CD4-positive, alpha-beta memory T cell (primary cell): ENCODE measurements at regions of chr10 and their contacts with region 1.

Region 1: DNA sequence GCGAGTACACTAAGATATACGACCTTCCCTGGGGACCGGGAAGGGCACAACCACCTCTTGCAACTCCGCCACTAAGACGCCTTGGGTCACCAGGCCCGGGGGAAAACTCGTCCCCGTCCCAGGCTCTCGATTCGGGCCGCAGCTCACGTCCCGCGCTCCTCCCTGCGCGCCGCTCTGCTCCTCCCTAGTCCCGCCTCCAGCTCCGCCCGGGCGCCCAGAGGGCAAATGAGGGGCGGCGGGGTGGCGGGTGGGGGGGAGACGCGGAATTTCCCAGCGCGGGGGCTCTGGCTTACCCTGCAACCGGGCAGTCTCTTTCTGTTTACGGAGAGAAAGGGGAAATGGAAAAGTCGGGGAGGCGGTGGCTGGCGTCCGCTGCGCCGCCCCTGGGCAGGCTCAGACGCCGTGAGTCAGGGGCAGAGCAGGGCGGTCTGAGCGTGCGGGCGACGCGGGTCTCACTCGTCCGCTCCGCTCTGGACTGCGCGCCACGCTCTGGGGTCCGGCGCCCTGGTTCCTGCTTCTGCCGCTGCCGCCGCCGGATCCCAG is at the start of gene MAP3K8:
- DNase-seq: peak; percentile 75 to 89 (median 79)
- H3K4me3 ChIP-seq: peak within 1 kb of the TSS; percentile 55 to 75
- H3K4me3 Mint-ChIP-seq: peak within 1 kb of the TSS; percentile 83 to 94 (median 92)
- H3K27ac ChIP-seq: peak within 1 kb of the TSS; percentile 88
- H3K27ac Mint-ChIP-seq: peak within 1 kb of the TSS; percentile 70 to 94 (median 91)
- H3K4me1 ChIP-seq: peaks cover 51% of the 10 kb centered on the region
- H3K4me1 Mint-ChIP-seq: peaks cover 37 to 55% (median 45%) of the 10 kb centered on the region in 4 donors
- H3K27me3 ChIP-seq: no peaks in the 10 kb centered on the region
- H3K27me3 Mint-ChIP-seq: no peaks in the 10 kb centered on the region
- total RNA-seq, gene MAP3K8: 5.5 to 6.5 TPM

Region 2: DNA sequence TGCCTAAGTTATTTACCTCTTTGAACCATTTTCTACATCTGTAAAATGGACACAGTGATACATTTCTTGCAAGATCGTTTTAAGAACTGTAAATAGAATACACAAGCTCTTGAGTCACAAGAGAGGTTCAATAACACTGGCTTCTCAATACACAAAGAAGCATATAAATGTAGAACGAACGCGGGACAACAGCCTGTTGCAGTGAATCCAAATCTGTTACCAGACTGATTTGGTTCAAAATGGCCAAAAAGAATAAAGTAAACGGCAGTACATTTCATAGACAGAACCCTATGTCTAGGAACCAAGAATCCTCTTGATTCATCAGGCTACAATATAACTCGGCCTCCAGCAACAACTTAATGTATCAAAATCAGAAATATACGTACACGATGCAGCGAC is 85.4 kb before region 1 on chr10:
- CTCF ChIA-PET with region 1: no interaction called
- POLR2A ChIA-PET with region 1: interaction called, 3 read pairs
- intact Hi-C with region 1: loop called (anchors 2 kb)
- DNase-seq: no peak
- H3K4me3 ChIP-seq: peak overlapping the region; percentile 82 to 96
- H3K4me3 Mint-ChIP-seq: peak overlapping the region; percentile 92 to 98 (median 94)
- H3K27ac ChIP-seq: peak overlapping the region; percentile 79
- H3K27ac Mint-ChIP-seq: peak overlapping the region; percentile 90 to 98 (median 94)
- H3K4me1 ChIP-seq: peaks cover 42% of the 10 kb centered on the region
- H3K4me1 Mint-ChIP-seq: peaks cover 35 to 60% (median 50%) of the 10 kb centered on the region in 4 donors
- H3K27me3 ChIP-seq: no peaks in the 10 kb centered on the region
- H3K27me3 Mint-ChIP-seq: no peaks in the 10 kb centered on the region

Region 3: DNA sequence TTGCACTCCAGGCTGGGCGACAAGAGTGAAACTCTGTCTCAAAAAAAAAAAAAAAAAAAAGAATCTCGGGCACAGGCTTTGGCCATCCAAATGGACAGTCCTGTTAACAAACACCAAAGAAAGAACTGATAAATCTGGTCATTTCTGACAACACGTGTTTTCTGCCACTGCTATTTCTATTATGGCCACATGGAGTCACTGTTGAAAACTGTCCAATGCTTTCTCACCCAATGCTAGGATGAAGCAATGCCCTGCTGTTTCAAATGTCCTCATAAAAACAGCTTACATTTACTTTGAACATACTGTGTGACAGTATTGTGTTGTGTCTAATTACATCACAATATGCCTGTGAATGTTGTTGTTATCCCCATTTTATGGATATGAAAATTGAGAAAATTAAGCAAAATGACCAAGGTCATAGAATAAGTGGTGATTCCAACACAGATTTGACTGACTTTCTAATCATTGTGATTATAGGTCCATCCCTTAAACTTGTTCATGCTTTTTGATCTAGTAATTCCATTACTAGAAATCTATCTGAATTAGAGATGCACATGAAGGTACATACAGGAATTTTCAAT is 19.7 kb before region 1 on chr10:
- CTCF ChIA-PET with region 1: interaction called, 9 read pairs
- POLR2A ChIA-PET with region 1: interaction called, 22 read pairs
- intact Hi-C with region 1: loop called (anchors 1 kb)
- DNase-seq: peak in 4 of 5 donors; percentile 46 to 53 (median 52)
- H3K4me3 ChIP-seq: no peak overlapping the region
- H3K4me3 Mint-ChIP-seq: no peak overlapping the region
- H3K27ac ChIP-seq: no peak overlapping the region
- H3K27ac Mint-ChIP-seq: no peak overlapping the region
- H3K4me1 ChIP-seq: peaks cover 15% of the 10 kb centered on the region
- H3K4me1 Mint-ChIP-seq: peaks cover 11 to 19% (median 16%) of the 10 kb centered on the region in 4 donors
- H3K27me3 ChIP-seq: no peaks in the 10 kb centered on the region
- H3K27me3 Mint-ChIP-seq: no peaks in the 10 kb centered on the region

Region 4: GRCh38 chr10:30420266-30420665 is 13.5 kb before region 1 on chr10:
- CTCF ChIA-PET with region 1: interaction called, 7 read pairs
- POLR2A ChIA-PET with region 1: interaction called, 22 read pairs
- intact Hi-C with region 1: loop called (anchors 1 kb)
- DNase-seq: no peak
- H3K4me3 ChIP-seq: no peak overlapping the region
- H3K4me3 Mint-ChIP-seq: no peak overlapping the region
- H3K27ac ChIP-seq: no peak overlapping the region
- H3K27ac Mint-ChIP-seq: no peak overlapping the region
- H3K4me1 ChIP-seq: peaks cover 15% of the 10 kb centered on the region
- H3K4me1 Mint-ChIP-seq: peaks cover 10 to 22% (median 15%) of the 10 kb centered on the region in 4 donors
- H3K27me3 ChIP-seq: no peaks in the 10 kb centered on the region
- H3K27me3 Mint-ChIP-seq: no peaks in the 10 kb centered on the region

Region 5: GRCh38 chr10:30456266-30456665 is 22.5 kb after region 1 on chr10:
- CTCF ChIA-PET with region 1: interaction called, 5 read pairs
- POLR2A ChIA-PET with region 1: interaction called, 26 read pairs
- intact Hi-C with region 1: no loop called
- DNase-seq: peak in 3 of 5 donors; percentile 22 to 40 (median 34)
- H3K4me3 ChIP-seq: peak overlapping the region in 1 of 2 donors; percentile 13
- H3K4me3 Mint-ChIP-seq: peak overlapping the region in 7 of 8 donors; percentile 55 to 82 (median 74)
- H3K27ac ChIP-seq: peak overlapping the region; percentile 24
- H3K27ac Mint-ChIP-seq: peak overlapping the region; percentile 35 to 84 (median 58)
- H3K4me1 ChIP-seq: peaks cover 42% of the 10 kb centered on the region
- H3K4me1 Mint-ChIP-seq: peaks cover 19 to 39% (median 27%) of the 10 kb centered on the region in 4 donors
- H3K27me3 ChIP-seq: no peaks in the 10 kb centered on the region
- H3K27me3 Mint-ChIP-seq: no peaks in the 10 kb centered on the region